Activated CD4-positive, alpha-beta T cell treated with anti-CD3 and anti-CD28 coated beads for 36 hours (primary cell): ENCODE measurements at regions of chr20 and their contacts with region 1.

Region 1: GRCh38 chr20:50115591-50116372 is 2.8 kb upstream of the UBE2V1 start:
- DNase-seq: peak; percentile 96
- ATAC-seq: peak; percentile 81
- H3K4me3 Mint-ChIP-seq: peak overlapping the region; percentile 93
- H3K27ac Mint-ChIP-seq: peak overlapping the region; percentile 88
- H3K4me1 Mint-ChIP-seq: peaks cover 39% of the 10 kb centered on the region
- H3K27me3 Mint-ChIP-seq: no peaks in the 10 kb centered on the region

Region 2: GRCh38 chr20:49812463-49813304 is 303.1 kb before region 1 on chr20 and contains the start of gene SLC9A8:
- CTCF ChIA-PET with region 1: no interaction called
- POLR2A ChIA-PET with region 1: no interaction called
- intact Hi-C with region 1: loop called in 1 of 2 experiments (anchors 5 kb)
- DNase-seq: peak; percentile 89
- ATAC-seq: peak; percentile 92
- H3K4me3 Mint-ChIP-seq: peak within 1 kb of the TSS; percentile 94
- H3K27ac Mint-ChIP-seq: peak within 1 kb of the TSS; percentile 98
- H3K4me1 Mint-ChIP-seq: peaks cover 28% of the 10 kb centered on the region
- H3K27me3 Mint-ChIP-seq: no peaks in the 10 kb centered on the region
- total RNA-seq, gene SLC9A8: 12.6 to 16.7 TPM

Region 3: DNA sequence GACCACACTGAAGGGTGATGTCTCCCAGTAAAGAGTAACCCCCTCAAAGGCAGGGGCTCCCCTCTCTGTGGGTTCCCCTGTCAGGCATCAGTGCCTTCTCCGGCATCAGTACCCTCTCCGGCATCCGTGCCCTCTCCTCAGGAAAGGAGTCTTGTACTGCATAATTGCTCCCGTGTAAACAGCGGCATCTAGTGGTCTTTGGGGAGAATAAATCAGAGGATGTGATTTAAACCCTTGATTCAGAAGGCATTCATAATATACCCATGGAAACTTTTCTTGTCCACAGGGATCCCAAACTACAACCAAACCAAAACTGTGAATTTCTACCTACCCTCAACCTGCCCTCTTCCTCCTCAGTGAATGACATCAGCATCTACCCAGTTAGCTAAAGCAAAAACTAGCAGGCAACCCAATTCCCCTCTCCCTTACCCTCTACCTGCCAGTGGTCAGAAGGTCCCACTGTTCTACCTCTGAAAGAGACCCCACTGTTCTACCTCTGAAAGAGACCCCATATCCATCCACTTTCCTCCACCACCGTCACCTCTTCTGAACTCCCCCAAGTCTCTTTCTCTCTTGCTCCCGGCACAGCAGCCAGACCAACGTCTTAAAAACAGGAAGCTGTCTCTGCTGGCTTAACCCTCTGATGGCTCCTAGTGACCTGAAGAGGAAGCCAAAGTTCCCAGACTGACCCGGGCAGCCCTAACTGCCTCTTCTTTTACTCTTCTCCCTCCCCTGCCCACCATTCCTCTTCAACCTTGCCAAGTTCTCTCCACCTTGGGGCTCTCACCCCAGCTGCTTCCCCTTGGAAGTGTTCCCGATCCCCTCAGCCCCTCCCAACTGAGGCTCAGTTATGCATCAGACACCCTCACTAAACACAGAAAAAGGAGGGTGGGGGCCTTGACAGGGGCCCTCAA is 30.1 kb before region 1 on chr20:
- CTCF ChIA-PET with region 1: interaction called, 10 read pairs
- POLR2A ChIA-PET with region 1: no interaction called
- intact Hi-C with region 1: no loop called
- DNase-seq: peak; percentile 58
- ATAC-seq: peak; percentile 92
- H3K4me3 Mint-ChIP-seq: peak overlapping the region; percentile 1
- H3K27ac Mint-ChIP-seq: peak overlapping the region; percentile 51
- H3K4me1 Mint-ChIP-seq: peaks cover 33% of the 10 kb centered on the region
- H3K27me3 Mint-ChIP-seq: no peaks in the 10 kb centered on the region

Region 4: DNA sequence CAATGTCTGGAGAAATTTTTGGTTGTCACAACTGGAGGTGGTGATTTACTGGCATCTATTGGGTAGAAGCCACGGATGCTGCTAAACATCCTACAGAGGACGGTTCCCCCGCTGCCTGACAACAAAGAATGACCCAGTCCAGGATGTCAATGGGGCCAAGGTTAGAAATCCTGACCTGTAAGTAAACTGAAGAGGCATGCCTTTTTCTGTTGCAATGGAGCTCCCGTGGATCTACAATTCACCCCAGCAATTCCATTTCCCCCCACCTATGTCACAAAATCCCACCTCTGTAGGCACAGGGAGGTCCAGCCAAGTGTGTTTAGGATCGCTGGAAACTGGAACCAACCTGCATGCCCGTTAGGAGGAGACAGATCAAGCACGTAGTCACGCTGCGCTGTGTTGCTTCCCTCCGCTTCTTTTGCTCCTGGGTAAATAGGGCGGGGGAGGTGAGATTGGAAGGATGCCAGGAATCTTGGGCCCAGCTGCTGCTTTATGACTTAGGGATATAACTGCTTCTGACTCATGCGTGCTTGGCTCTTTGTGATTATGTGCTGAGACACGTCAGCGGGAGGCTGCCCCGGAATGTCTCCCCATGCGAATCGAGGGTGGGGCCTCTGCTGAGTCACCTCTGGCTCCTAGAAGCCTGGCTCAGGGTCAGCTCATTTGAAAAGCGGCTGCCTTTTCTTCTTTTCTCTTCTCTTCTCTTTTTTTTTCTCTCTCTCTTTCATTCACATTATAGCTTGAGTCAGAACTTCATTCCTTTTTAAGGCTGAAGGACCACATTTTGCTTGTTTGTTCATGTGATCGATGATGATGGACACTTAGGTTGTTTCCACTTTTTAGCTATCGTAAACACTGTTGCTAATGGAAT is 50.1 kb after region 1 on chr20:
- CTCF ChIA-PET with region 1: interaction called, 172 read pairs
- POLR2A ChIA-PET with region 1: interaction called, 3 read pairs
- intact Hi-C with region 1: loop called (anchors 1 kb)
- DNase-seq: peak; percentile 95
- ATAC-seq: peak; percentile 100
- H3K4me3 Mint-ChIP-seq: peak overlapping the region; percentile 58
- H3K27ac Mint-ChIP-seq: peak overlapping the region; percentile 72
- H3K4me1 Mint-ChIP-seq: peaks cover 13% of the 10 kb centered on the region
- H3K27me3 Mint-ChIP-seq: peaks cover 5% of the 10 kb centered on the region

Region 5: GRCh38 chr20:50561379-50562078 is 445.7 kb after region 1 on chr20:
- CTCF ChIA-PET with region 1: no interaction called
- POLR2A ChIA-PET with region 1: no interaction called
- intact Hi-C with region 1: loop called in 1 of 2 experiments (anchors 5 kb)
- DNase-seq: peak; percentile 85
- ATAC-seq: peak; percentile 84
- H3K4me3 Mint-ChIP-seq: peak overlapping the region; percentile 76
- H3K27ac Mint-ChIP-seq: peak overlapping the region; percentile 99
- H3K4me1 Mint-ChIP-seq: peaks cover 85% of the 10 kb centered on the region
- H3K27me3 Mint-ChIP-seq: no peaks in the 10 kb centered on the region